ENCODE measurements at regions of chrX and their contacts with region 1.

Region 1: DNA sequence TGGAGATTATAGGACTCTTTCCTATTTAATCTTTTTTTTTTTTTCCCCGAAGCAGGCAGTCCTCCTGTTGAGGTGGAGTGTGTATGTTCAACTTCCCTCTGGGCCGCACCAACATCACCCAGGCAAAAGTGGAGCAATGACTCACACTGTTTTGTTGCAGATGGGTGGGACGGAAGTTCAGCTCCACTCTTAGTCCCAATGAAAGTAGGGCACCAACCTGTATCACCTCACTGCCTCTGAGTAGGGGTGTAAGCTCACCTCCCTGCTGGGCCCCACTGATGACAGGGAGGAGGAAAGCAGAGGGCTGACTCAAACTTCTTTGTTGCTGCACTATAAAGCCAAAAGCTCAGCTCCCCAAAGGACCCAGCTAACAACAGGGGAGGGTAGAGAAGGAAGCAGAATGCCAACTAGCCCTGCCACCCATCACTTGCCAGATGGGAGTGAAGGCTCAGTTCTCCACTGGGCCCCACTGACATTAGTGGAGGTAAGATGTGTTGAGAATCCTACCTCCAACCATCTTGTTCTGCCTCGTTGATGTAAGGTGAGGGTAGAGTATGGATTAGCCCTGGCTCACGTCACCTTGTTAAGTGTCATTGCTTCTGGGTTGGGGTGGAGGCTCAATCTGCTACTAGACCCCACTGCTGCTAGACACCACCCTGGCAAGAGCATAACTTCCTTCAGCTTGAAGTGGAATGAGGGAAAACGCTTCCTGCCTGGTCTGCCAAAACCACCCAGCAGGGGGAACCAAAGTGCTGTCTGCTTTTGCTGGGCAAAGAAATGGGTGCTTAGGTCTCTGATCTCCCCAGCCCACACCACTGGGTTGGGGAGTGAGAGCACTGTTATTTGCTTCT is 14.1 kb downstream of the RPS6KA3 start:
- DNase-seq: peak; percentile 71
- H3K4me3 Mint-ChIP-seq: no peak overlapping the region
- H3K27ac Mint-ChIP-seq: peak overlapping the region; percentile 90
- H3K4me1 Mint-ChIP-seq: peaks cover 51% of the 10 kb centered on the region
- H3K27me3 Mint-ChIP-seq: no peaks in the 10 kb centered on the region

Region 2: GRCh38 chrX:20159797-20160385 is 92.7 kb before region 1 on chrX:
- CTCF ChIA-PET with region 1: no interaction called
- POLR2A ChIA-PET with region 1: no interaction called
- DNase-seq: no peak
- H3K4me3 Mint-ChIP-seq: no peak overlapping the region
- H3K27ac Mint-ChIP-seq: no peak overlapping the region
- H3K4me1 Mint-ChIP-seq: no peaks in the 10 kb centered on the region
- H3K27me3 Mint-ChIP-seq: no peaks in the 10 kb centered on the region

Region 3: GRCh38 chrX:20266810-20267606 is 14.4 kb after region 1 on chrX and contains the start of gene RPS6KA3:
- CTCF ChIA-PET with region 1: interaction called, 5 read pairs
- POLR2A ChIA-PET with region 1: interaction called, 19 read pairs
- DNase-seq: peak; percentile 92
- H3K4me3 Mint-ChIP-seq: peak within 1 kb of the TSS; percentile 95
- H3K27ac Mint-ChIP-seq: peak within 1 kb of the TSS; percentile 92
- H3K4me1 Mint-ChIP-seq: peaks cover 19% of the 10 kb centered on the region
- H3K27me3 Mint-ChIP-seq: peaks cover 8% of the 10 kb centered on the region
- total RNA-seq, gene RPS6KA3: 76.6 to 78.0 TPM

Region 4: DNA sequence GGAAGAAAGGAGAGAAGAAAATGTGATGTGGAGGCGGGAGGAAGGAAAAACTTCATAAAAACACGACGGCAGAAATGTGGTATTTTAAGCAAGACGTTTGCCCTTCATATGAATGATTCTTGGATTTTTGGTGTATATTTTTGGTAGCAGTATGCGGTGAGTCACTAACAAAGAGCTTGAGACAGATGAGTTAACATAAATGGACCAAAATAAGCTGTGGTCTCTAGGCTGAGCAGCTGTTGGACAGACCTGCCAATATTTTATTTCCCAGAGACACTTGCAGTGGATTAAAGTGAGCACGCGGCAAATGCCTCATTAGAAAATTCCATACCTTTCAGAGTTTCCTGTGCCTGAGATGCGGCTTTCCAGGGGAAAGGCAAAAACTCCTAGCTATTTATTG is 57.2 kb after region 1 on chrX:
- CTCF ChIA-PET with region 1: no interaction called
- POLR2A ChIA-PET with region 1: no interaction called
- DNase-seq: no peak
- H3K4me3 Mint-ChIP-seq: no peak overlapping the region
- H3K27ac Mint-ChIP-seq: no peak overlapping the region
- H3K4me1 Mint-ChIP-seq: no peaks in the 10 kb centered on the region
- H3K27me3 Mint-ChIP-seq: no peaks in the 10 kb centered on the region